Testis (tissue), 5 donors: ENCODE measurements at regions of chr13 and their contacts with region 1.

Region 1: GRCh38 chr13:21297914-21298831 is 121.7 kb downstream of the MRPL57 start:
- DNase-seq: peak; percentile 91
- H3K4me3 ChIP-seq: peak overlapping the region; percentile 91
- H3K27ac ChIP-seq: peak overlapping the region in 1 of 2 donors; percentile 76
- H3K4me1 ChIP-seq: peaks cover 9% of the 10 kb centered on the region
- H3K27me3 ChIP-seq: no peaks in the 10 kb centered on the region
- CTCF ChIP-seq: peak; percentile 89 to 98 (median 96)
- POLR2A ChIP-seq: no peak

Region 2: GRCh38 chr13:21075011-21075898 is 222.9 kb before region 1 on chr13:
- intact Hi-C with region 1: no loop called
- DNase-seq: peak; percentile 42
- H3K4me3 ChIP-seq: peak overlapping the region; percentile 55 to 65
- H3K27ac ChIP-seq: peak overlapping the region; percentile 78 to 83
- H3K4me1 ChIP-seq: peaks cover 6% of the 10 kb centered on the region
- H3K27me3 ChIP-seq: no peaks in the 10 kb centered on the region
- CTCF ChIP-seq: no peak
- POLR2A ChIP-seq: no peak

Region 3: DNA sequence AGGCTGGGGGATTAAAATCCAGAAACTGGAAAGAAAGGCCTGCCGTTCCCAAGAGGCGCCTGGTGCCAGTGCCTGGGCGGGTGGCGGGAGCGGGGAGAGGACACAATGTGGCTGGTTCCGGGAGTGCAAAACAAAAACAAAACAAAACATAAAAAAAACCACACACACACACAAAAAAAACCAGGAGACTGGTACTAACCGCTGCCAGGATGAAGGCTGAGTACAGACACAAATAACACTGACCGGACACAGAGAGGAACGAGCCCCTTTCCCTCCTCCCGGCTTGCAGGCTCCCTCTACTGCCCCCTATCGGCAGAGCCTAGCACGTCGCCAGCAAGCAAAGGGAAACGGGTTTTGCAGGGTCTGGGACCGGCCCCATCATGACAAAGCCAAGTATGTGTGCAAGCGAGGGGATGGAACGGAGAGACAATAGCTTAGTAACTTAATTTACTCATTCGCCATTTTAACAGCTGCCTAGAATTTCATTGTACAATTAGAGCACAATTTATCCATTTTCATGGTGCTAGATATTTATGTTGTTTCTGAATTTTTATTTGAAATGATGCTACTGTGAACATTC is 178.8 kb after region 1 on chr13:
- intact Hi-C with region 1: loop called (anchors 5 kb)
- DNase-seq: peak; percentile 88
- H3K4me3 ChIP-seq: peak overlapping the region in 1 of 2 donors; percentile 3
- H3K27ac ChIP-seq: no peak overlapping the region
- H3K4me1 ChIP-seq: no peaks in the 10 kb centered on the region
- H3K27me3 ChIP-seq: no peaks in the 10 kb centered on the region
- CTCF ChIP-seq: peak; percentile 85 to 87 (median 87)
- POLR2A ChIP-seq: no peak

Region 4: GRCh38 chr13:21528621-21529020 is 230.4 kb after region 1 on chr13:
- intact Hi-C with region 1: no loop called
- DNase-seq: no peak
- H3K4me3 ChIP-seq: no peak overlapping the region
- H3K27ac ChIP-seq: no peak overlapping the region
- H3K4me1 ChIP-seq: no peaks in the 10 kb centered on the region
- H3K27me3 ChIP-seq: no peaks in the 10 kb centered on the region
- CTCF ChIP-seq: no peak
- POLR2A ChIP-seq: no peak